ENCODE measurements at regions of chr3 and their contacts with region 1.

Region 1: DNA sequence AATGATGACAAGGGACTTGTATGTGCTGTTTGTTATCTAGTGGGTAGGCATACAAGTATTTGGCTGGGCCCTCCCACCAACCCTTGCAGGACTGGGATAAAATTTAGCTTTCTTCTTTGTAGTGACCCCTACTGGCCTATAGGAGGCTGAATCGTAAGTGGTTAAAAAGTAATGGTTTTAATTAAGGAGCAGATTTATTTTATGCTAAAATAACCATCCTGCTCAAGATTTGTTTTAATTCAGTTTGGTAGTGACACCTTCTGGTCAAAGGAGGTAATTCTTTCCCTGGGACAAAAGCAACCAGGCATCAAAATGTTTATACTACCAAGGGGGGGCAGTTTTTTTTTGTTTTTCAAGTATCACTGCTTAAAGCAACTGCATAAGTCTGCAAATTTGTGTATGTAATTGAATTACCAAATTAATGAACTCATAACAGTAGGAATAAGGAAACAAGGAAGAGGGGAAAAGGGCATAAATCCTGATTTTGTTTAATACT is 70.7 kb downstream of the TOP2B start:
- DNase-seq: peak; percentile 58
- H3K4me3 ChIP-seq: no peak overlapping the region
- H3K27ac ChIP-seq: no peak overlapping the region
- H3K4me1 ChIP-seq: peaks cover 4% of the 10 kb centered on the region
- H3K27me3 ChIP-seq: no peaks in the 10 kb centered on the region
- CTCF ChIP-seq: peak; percentile 64 to 68

Region 2: DNA sequence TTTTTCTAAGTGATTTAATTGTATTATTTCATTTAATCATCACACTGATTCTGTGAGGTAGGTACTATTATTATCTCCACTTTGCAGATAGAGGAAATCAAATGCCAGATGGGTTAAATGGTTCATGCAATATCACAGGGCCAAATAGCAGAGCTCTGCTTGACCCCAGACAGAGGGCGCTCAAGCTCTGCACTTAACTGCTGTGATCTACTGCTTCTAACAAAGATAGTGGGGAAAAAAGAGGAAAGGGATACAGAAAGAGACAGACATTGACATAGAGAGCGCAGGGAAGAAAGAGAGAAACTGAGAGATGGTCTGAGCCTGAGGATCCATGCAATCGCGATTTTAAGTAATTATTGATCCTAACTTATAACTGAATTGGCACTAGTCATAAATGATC is 820.3 kb before region 1 on chr3:
- CTCF ChIA-PET with region 1: no interaction called
- dilution Hi-C with region 1: no loop called
- in situ Hi-C with region 1: loop called (anchors 10 kb)
- intact Hi-C with region 1: loop called (anchors 1 kb)
- DNase-seq: peak; percentile 52
- H3K4me3 ChIP-seq: no peak overlapping the region
- H3K27ac ChIP-seq: no peak overlapping the region
- H3K4me1 ChIP-seq: no peaks in the 10 kb centered on the region
- H3K27me3 ChIP-seq: no peaks in the 10 kb centered on the region
- CTCF ChIP-seq: peak; percentile 88 to 90

Region 3: GRCh38 chr3:24963762-24964625 is 630.1 kb before region 1 on chr3:
- CTCF ChIA-PET with region 1: no interaction called
- dilution Hi-C with region 1: no loop called
- in situ Hi-C with region 1: no loop called
- intact Hi-C with region 1: loop called (anchors 1 kb)
- DNase-seq: peak; percentile 9
- H3K4me3 ChIP-seq: no peak overlapping the region
- H3K27ac ChIP-seq: no peak overlapping the region
- H3K4me1 ChIP-seq: no peaks in the 10 kb centered on the region
- H3K27me3 ChIP-seq: no peaks in the 10 kb centered on the region
- CTCF ChIP-seq: peak; percentile 41 to 53

Region 4: DNA sequence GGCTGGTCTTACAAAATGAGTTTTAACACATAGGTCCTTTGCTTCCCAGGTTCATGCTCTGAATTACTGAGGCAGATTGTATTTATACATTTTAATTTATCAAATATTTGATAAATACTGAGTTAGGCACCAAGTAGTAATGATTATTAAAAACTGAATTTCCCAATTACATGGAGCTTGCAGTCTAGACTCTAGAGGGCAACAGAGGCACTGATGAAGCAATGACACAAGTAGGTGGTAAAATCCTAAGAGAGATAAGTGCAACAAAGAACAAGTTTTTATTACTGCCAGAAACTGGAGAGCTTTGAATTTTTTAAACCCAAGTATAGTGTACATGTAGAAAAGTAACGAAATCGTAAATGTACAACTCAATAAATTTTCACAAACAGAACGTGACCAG is 572.2 kb before region 1 on chr3:
- CTCF ChIA-PET with region 1: no interaction called
- dilution Hi-C with region 1: no loop called
- in situ Hi-C with region 1: loop called (anchors 25 kb)
- intact Hi-C with region 1: loop called (anchors 1 kb)
- DNase-seq: peak; percentile 8
- H3K4me3 ChIP-seq: no peak overlapping the region
- H3K27ac ChIP-seq: no peak overlapping the region
- H3K4me1 ChIP-seq: no peaks in the 10 kb centered on the region
- H3K27me3 ChIP-seq: no peaks in the 10 kb centered on the region
- CTCF ChIP-seq: peak; percentile 44 to 76

Region 5: GRCh38 chr3:25427942-25428788 is 165.9 kb before region 1 on chr3 and contains the start of gene RARB:
- CTCF ChIA-PET with region 1: no interaction called
- dilution Hi-C with region 1: no loop called
- in situ Hi-C with region 1: no loop called
- intact Hi-C with region 1: loop called (anchors 2 kb)
- DNase-seq: peak; percentile 90
- H3K4me3 ChIP-seq: peak within 1 kb of the TSS; percentile 44 to 49 (median 49)
- H3K27ac ChIP-seq: no peak within 1 kb of the TSS
- H3K4me1 ChIP-seq: peaks cover 33% of the 10 kb centered on the region
- H3K27me3 ChIP-seq: peaks cover 2% of the 10 kb centered on the region
- CTCF ChIP-seq: no peak
- total RNA-seq, gene RARB: 0.59 to 8.2 TPM

Region 6: DNA sequence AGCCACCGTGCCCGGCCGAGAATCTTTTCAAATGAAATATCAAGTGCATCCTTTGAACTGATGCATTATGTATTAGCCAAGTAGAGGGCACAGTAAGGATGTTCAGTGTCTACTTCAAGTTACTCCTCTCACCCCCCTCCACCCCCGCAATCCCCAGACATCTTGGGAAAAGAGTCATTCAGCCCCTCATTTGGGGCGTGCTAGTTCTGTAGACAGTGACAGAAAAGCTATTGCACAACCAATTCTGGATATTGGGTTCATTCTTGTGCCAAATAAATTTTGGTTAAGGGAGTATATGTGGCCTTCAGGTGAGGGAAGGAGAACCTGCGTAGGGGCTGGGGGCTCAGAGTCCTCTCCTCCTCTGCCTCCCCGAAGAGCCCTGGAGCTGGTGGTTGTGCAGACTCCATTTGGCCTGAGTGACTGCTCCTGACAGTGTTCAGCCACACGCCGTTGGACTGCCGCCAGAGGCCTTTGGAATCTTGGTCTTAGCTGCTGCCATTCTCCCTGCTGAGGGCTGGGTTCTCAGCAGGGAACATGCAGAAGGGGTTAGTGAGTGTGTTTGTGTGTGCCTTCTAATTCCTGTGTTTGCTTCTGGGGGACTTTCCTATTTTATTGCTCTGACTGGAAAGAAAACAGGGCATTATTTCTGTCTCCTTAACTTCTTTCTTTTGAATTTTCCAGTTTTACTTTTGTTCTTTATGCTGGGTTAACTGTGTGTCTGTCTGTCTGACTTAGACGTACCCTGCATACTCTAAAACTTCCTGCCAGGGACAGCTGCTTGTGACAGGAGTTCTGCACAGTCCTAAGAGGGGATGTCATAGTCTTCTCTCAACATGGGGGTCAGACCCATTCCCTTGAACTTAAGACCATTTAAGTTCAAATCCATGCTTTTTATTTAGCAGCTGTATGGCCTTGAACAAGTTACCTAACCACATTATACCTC is 145.0 kb before region 1 on chr3:
- CTCF ChIA-PET with region 1: no interaction called
- dilution Hi-C with region 1: no loop called
- in situ Hi-C with region 1: no loop called
- intact Hi-C with region 1: no loop called
- DNase-seq: peak; percentile 54
- H3K4me3 ChIP-seq: no peak overlapping the region
- H3K27ac ChIP-seq: no peak overlapping the region
- H3K4me1 ChIP-seq: peaks cover 1% of the 10 kb centered on the region
- H3K27me3 ChIP-seq: no peaks in the 10 kb centered on the region
- CTCF ChIP-seq: no peak

Region 7: GRCh38 chr3:25775936-25776335 is 181.9 kb after region 1 on chr3:
- CTCF ChIA-PET with region 1: no interaction called
- dilution Hi-C with region 1: no loop called
- in situ Hi-C with region 1: no loop called
- intact Hi-C with region 1: no loop called
- DNase-seq: no peak
- H3K4me3 ChIP-seq: no peak overlapping the region
- H3K27ac ChIP-seq: no peak overlapping the region
- H3K4me1 ChIP-seq: no peaks in the 10 kb centered on the region
- H3K27me3 ChIP-seq: no peaks in the 10 kb centered on the region
- CTCF ChIP-seq: no peak

Region 8: GRCh38 chr3:25834346-25834745 is 240.3 kb after region 1 on chr3:
- CTCF ChIA-PET with region 1: no interaction called
- dilution Hi-C with region 1: no loop called
- in situ Hi-C with region 1: no loop called
- intact Hi-C with region 1: no loop called
- DNase-seq: no peak
- H3K4me3 ChIP-seq: no peak overlapping the region
- H3K27ac ChIP-seq: no peak overlapping the region
- H3K4me1 ChIP-seq: no peaks in the 10 kb centered on the region
- H3K27me3 ChIP-seq: no peaks in the 10 kb centered on the region
- CTCF ChIP-seq: no peak

Region 9: GRCh38 chr3:26191556-26191955 is 597.5 kb after region 1 on chr3:
- CTCF ChIA-PET with region 1: no interaction called
- dilution Hi-C with region 1: no loop called
- in situ Hi-C with region 1: no loop called
- intact Hi-C with region 1: no loop called
- DNase-seq: no peak
- H3K4me3 ChIP-seq: no peak overlapping the region
- H3K27ac ChIP-seq: no peak overlapping the region
- H3K4me1 ChIP-seq: no peaks in the 10 kb centered on the region
- H3K27me3 ChIP-seq: no peaks in the 10 kb centered on the region
- CTCF ChIP-seq: no peak

Measured in mammary epithelial cell (primary cell).